ENCODE measurements at regions of chr18 and their contacts with region 1.

Region 1: GRCh38 chr18:75297731-75298130 is 87.1 kb downstream of the TSHZ1 start:
- DNase-seq: no peak
- H3K4me3 ChIP-seq: peak overlapping the region in 1 of 3 donors; percentile 15
- H3K27ac ChIP-seq: peak overlapping the region in 1 of 2 donors; percentile 64
- H3K4me1 ChIP-seq: no peaks in the 10 kb centered on the region
- H3K27me3 ChIP-seq: no peaks in the 10 kb centered on the region
- CTCF ChIP-seq: no peak
- POLR2A ChIP-seq: no peak

Region 2: DNA sequence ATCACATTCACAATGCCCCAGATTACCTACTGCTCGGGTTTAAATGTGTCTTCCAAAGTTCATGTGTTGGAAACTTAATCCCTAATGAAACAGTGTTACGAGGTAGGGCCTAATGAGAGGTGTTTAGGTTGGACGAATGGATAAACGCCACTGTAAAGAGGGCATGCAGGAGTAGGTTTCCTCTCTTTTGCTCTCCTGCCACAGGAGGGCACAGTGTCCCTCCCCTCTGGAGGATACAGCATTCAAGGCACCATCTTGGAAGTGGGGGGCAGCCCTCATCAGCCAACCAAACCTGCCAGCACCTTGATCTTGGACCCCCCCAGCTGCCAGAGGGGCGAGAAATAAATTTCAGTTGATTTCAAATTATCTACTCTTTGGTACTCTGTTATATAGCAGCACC is 16.4 kb after region 1 on chr18:
- intact Hi-C with region 1: loop called (anchors 1 kb)
- DNase-seq: no peak
- H3K4me3 ChIP-seq: no peak overlapping the region
- H3K27ac ChIP-seq: no peak overlapping the region
- H3K4me1 ChIP-seq: no peaks in the 10 kb centered on the region
- H3K27me3 ChIP-seq: no peaks in the 10 kb centered on the region
- CTCF ChIP-seq: no peak
- POLR2A ChIP-seq: no peak

Measured in breast epithelium (tissue), 4 donors.